Activated CD4-positive, alpha-beta T cell treated with anti-CD3 and anti-CD28 coated beads for 36 hours (primary cell): ENCODE measurements at regions of chr6 and their contacts with region 1.

Region 1: GRCh38 chr6:116456927-116457326 is 4.2 kb upstream of the CALHM6 start:
- DNase-seq: no peak
- ATAC-seq: no peak
- H3K4me3 Mint-ChIP-seq: no peak overlapping the region
- H3K27ac Mint-ChIP-seq: no peak overlapping the region
- H3K4me1 Mint-ChIP-seq: peaks cover 10% of the 10 kb centered on the region
- H3K27me3 Mint-ChIP-seq: peaks cover 22% of the 10 kb centered on the region

Region 2: DNA sequence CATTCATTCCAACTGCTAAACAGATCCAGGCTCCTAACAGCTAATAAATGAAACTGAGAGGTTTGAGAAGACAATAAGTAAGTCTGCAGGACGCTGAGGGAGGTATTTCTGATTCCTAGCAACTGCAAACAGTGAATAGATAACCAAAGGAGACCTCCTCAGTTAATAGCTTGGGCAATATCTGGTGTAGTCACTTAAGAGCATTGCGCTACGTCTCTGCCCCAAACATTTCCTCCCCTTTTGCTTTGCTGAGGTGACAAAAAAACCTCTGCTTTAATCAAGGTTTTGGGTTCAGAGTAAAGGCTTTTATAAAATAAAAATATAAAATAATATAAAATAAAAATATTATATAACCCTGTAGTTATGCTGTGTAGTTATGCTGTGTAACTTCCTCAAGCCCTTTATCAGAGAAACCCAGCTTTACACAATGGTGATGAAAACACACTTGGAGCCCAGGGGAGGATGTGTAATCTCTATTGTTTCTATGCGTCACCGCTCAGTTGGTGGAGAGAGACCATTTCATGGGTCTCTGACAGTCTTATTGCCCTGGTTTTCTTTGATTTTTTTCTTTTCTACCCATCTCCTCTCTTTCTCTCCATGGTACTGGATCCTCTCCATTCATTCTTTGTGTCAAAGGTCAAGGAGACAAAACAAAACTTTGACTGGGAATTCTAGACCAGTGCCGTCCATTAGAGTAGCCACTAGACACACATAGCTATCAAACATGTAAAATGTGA is 35.6 kb after region 1 on chr6:
- CTCF ChIA-PET with region 1: no interaction called
- POLR2A ChIA-PET with region 1: no interaction called
- intact Hi-C with region 1: loop called in 1 of 2 experiments (anchors 1 kb)
- DNase-seq: no peak
- ATAC-seq: no peak
- H3K4me3 Mint-ChIP-seq: no peak overlapping the region
- H3K27ac Mint-ChIP-seq: no peak overlapping the region
- H3K4me1 Mint-ChIP-seq: no peaks in the 10 kb centered on the region
- H3K27me3 Mint-ChIP-seq: peaks cover 2% of the 10 kb centered on the region